Transverse colon (tissue), 4 donors: ENCODE measurements at regions of chr7 and their contacts with region 1.

Region 1: DNA sequence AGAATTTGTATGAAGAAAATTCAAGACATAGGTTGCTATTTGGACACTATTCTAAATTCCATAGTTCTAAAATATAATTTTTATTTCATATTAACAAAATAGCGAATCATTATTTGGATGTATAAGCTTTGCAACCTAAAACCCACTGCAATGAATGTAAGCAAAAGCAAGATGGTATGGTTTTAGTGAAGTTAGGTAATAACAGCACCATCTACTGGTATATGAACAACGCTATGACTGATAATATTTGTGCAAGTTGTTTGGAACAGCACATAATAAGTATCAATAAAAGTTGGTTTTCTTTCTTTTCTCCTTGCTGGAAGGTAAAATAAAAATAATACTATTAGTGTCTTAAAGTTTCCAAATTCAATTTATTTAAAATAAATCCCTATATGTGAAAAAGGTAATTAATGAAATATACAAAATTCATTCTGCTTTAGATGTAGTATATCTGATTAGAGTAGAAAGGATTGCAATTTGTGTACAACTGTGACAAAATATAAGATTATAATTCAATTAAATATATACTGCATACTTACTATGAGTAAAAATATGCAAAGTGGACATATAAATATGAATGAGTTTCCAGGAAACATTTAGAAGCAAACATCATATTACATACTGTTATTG is 79.0 kb upstream of the LSM8 start:
- DNase-seq: no peak
- H3K4me3 ChIP-seq: no peak overlapping the region
- H3K27ac ChIP-seq: no peak overlapping the region
- H3K4me1 ChIP-seq: no peaks in the 10 kb centered on the region
- H3K27me3 ChIP-seq: no peaks in the 10 kb centered on the region
- CTCF ChIP-seq: peak in 4 of 5 experiments; percentile 35 to 51 (median 48)
- EP300 ChIP-seq: no peak
- POLR2A ChIP-seq: no peak

Region 2: GRCh38 chr7:116692401-116693308 is 1412.3 kb before region 1 on chr7:
- in situ Hi-C with region 1: no loop called
- intact Hi-C with region 1: loop called (anchors 10 kb)
- DNase-seq: no peak
- H3K4me3 ChIP-seq: no peak overlapping the region
- H3K27ac ChIP-seq: no peak overlapping the region
- H3K4me1 ChIP-seq: no peaks in the 10 kb centered on the region
- H3K27me3 ChIP-seq: no peaks in the 10 kb centered on the region
- CTCF ChIP-seq: no peak
- EP300 ChIP-seq: no peak
- POLR2A ChIP-seq: no peak

Region 3: DNA sequence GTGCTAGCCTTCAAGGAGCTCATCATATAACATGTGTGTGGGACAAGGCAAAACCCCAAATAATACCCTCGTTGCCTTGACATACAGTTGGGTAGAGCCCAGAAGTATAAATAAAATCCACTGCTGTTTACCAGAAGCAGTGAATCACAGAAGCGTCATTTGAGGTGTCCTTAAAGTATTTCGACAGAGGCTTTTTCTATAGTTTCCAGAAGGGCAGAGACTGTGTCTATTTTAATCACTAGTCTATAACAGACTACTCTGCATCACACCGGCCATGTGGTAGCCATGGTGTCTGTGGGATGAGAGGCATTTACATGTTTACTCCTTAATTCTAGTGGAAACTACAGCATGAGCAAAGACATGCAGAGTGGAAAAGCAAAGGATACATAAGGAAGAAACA is 363.0 kb before region 1 on chr7:
- in situ Hi-C with region 1: no loop called
- intact Hi-C with region 1: loop called (anchors 10 kb)
- DNase-seq: no peak
- H3K4me3 ChIP-seq: no peak overlapping the region
- H3K27ac ChIP-seq: no peak overlapping the region
- H3K4me1 ChIP-seq: no peaks in the 10 kb centered on the region
- H3K27me3 ChIP-seq: no peaks in the 10 kb centered on the region
- CTCF ChIP-seq: no peak
- EP300 ChIP-seq: no peak
- POLR2A ChIP-seq: no peak

Region 4: GRCh38 chr7:117750612-117751563 is 354.0 kb before region 1 on chr7:
- in situ Hi-C with region 1: loop called in 3 of 4 experiments (anchors 10 to 25 kb)
- intact Hi-C with region 1: loop called (anchors 10 kb)
- DNase-seq: no peak
- H3K4me3 ChIP-seq: no peak overlapping the region
- H3K27ac ChIP-seq: no peak overlapping the region
- H3K4me1 ChIP-seq: no peaks in the 10 kb centered on the region
- H3K27me3 ChIP-seq: no peaks in the 10 kb centered on the region
- CTCF ChIP-seq: peak; percentile 43 to 61 (median 52)
- EP300 ChIP-seq: no peak
- POLR2A ChIP-seq: no peak